ENCODE measurements at regions of chr16 and their contacts with region 1.

Region 1: DNA sequence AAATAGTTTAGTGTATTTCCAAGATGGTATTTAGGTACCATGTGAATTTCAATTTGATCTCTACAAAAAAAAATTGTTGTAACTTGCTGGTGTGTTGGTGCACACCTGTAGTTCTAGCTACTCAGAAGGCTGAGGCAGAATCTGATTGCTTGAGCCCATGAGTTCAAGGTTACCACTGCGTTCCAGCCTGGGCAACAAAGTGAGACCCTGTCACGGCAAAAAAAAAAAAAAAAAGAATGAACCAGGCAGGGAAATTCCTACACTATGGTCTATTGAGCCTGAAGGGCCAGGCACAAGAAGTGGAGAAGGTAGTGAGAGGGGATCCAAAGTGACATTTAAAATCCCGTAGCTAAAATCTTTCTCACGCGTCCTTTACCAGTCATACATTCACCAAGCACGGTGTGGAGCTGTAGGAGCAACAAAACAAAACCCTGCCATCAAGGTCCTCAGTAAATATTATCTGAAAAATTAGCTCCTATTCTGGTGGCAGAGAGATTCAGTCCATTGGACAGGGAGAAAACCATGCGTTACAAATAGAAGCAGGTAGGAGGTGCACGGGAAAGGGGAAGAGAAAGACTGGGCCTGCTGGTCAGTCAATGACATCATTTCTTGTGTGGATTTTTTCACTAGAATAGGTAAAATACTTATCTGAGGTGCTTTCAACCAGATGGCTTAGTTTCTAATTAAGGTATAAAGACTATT is 27.3 kb downstream of the TXNDC11 start:
- DNase-seq: no peak
- ATAC-seq: no peak
- H3K4me3 ChIP-seq: no peak overlapping the region
- H3K27ac ChIP-seq: no peak overlapping the region
- H3K4me1 ChIP-seq: peaks cover 2% of the 10 kb centered on the region; the same call in 1 of the 2 replicates
- H3K27me3 ChIP-seq: no peaks in the 10 kb centered on the region
- CTCF ChIP-seq: no peak
- POLR2A ChIP-seq: no peak
- RAD21 ChIP-seq: no peak

Region 2: DNA sequence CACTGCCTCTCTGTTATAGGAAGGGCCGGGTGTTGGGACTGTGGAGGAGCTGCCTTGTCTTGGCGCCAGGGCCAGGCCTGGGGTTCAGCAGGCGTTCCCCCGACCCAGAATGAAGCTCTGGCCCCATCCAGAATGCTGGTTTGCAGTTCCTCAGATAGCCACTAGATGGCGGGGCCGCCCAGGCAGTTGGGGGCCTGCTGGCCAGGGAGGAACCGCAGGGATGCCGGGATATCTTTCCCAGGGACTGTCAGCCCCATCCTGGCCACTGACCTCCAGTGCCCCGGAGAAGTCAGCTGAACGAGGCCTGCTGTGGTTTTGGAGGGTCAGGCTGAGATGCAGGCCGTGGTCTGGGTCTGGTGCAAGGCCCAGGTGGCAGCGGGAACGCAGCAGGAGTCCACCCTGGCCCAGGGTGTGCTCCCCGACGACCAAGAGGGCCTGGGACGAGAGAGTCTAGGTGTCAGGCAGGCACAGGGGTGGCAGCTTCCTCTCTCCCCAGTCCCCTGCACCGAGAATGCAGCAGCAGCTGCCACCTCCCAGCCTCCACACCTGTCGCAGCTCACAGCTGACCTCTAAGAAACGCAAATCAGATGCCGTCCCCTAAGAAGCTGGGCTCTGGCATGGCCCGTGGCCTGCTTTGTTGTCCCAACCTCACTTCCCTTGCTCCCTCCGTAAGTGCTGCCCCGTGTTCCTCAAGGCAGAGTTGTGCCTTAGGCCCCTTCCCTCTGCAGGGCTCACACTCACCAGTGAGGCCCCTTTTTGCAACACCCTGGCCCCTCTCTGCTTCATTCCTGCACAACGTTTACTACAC is 319.0 kb before region 1 on chr16:
- CTCF ChIA-PET with region 1: no interaction called
- POLR2A ChIA-PET with region 1: no interaction called
- dilution Hi-C with region 1: no loop called
- in situ Hi-C with region 1: loop called (anchors 5 kb)
- intact Hi-C with region 1: loop called (anchors 1 kb)
- DNase-seq: peak; percentile 60
- ATAC-seq: peak; percentile 99
- H3K4me3 ChIP-seq: no peak overlapping the region
- H3K27ac ChIP-seq: no peak overlapping the region
- H3K4me1 ChIP-seq: peaks cover 3% of the 10 kb centered on the region; the same call in 1 of the 2 replicates
- H3K27me3 ChIP-seq: peaks cover 2% of the 10 kb centered on the region; the same call in 1 of the 2 replicates
- CTCF ChIP-seq: peak; percentile 96
- POLR2A ChIP-seq: peak; percentile 50; the same call in 1 of the 2 replicates
- RAD21 ChIP-seq: peak; percentile 98

Region 3: GRCh38 chr16:11535471-11535870 is 179.9 kb before region 1 on chr16:
- CTCF ChIA-PET with region 1: interaction called, 3 read pairs
- POLR2A ChIA-PET with region 1: no interaction called
- dilution Hi-C with region 1: no loop called
- in situ Hi-C with region 1: no loop called
- intact Hi-C with region 1: loop called (anchors 2 kb)
- DNase-seq: no peak
- ATAC-seq: no peak
- H3K4me3 ChIP-seq: no peak overlapping the region
- H3K27ac ChIP-seq: no peak overlapping the region
- H3K4me1 ChIP-seq: peaks cover 5% of the 10 kb centered on the region; the same call in 1 of the 2 replicates
- H3K27me3 ChIP-seq: no peaks in the 10 kb centered on the region
- CTCF ChIP-seq: no peak
- POLR2A ChIP-seq: no peak
- RAD21 ChIP-seq: no peak

Region 4: DNA sequence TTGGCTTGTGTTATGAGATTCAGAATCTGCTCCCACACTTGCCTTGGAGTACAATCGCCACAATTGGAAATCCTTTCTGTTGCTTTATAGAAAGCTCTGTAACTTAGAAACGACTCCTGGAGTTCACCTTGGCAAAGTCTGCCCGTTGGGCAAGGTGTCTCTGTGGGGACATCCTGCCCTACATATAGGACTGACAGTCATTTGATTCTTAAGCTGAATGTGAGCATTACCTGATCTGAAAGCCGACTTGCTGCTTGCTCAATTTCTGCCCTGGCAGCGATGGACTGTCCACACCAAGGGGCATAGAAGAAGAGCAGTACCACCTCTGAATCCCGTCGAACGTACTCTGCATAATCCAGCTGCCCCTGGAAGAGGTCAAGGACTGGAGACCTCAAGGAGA is 20.4 kb after region 1 on chr16:
- CTCF ChIA-PET with region 1: interaction called, 3 read pairs
- POLR2A ChIA-PET with region 1: interaction called, 11 read pairs
- dilution Hi-C with region 1: no loop called
- in situ Hi-C with region 1: no loop called
- intact Hi-C with region 1: no loop called
- DNase-seq: no peak
- ATAC-seq: no peak
- H3K4me3 ChIP-seq: no peak overlapping the region
- H3K27ac ChIP-seq: no peak overlapping the region
- H3K4me1 ChIP-seq: peaks cover 7% of the 10 kb centered on the region
- H3K27me3 ChIP-seq: no peaks in the 10 kb centered on the region
- CTCF ChIP-seq: no peak
- POLR2A ChIP-seq: no peak
- RAD21 ChIP-seq: no peak

Region 5: DNA sequence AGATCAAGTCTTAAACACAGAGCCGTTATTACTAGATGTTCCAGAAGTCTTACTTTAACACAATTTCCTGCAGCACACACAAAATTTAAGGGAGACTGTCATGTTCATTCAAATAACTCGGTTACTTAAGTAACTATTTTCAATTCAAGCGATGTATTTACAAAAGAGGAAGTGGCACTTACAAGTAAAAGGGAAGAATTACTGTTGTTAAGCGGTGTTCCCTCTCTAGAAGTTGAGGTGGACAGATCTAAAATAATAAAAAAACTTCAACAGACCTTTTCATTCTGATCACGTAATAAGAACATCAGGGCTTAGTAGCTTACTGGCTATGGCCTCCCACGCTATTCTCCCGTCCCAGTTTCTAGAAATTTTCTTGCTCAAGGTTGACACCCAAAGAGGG is 53.5 kb after region 1 on chr16:
- CTCF ChIA-PET with region 1: no interaction called
- POLR2A ChIA-PET with region 1: no interaction called
- dilution Hi-C with region 1: no loop called
- in situ Hi-C with region 1: no loop called
- intact Hi-C with region 1: no loop called
- DNase-seq: no peak
- ATAC-seq: no peak
- H3K4me3 ChIP-seq: no peak overlapping the region
- H3K27ac ChIP-seq: no peak overlapping the region
- H3K4me1 ChIP-seq: no peaks in the 10 kb centered on the region
- H3K27me3 ChIP-seq: no peaks in the 10 kb centered on the region
- CTCF ChIP-seq: no peak
- POLR2A ChIP-seq: no peak
- RAD21 ChIP-seq: no peak